ENCODE measurements at regions of chr9 and their contacts with region 1.

Region 1: GRCh38 chr9:106862825-106863720 is at the start of gene ZNF462:
- DNase-seq: peak; percentile 61
- ATAC-seq: peak; percentile 50
- total RNA-seq, gene ZNF462: 21.2 TPM

Region 2: DNA sequence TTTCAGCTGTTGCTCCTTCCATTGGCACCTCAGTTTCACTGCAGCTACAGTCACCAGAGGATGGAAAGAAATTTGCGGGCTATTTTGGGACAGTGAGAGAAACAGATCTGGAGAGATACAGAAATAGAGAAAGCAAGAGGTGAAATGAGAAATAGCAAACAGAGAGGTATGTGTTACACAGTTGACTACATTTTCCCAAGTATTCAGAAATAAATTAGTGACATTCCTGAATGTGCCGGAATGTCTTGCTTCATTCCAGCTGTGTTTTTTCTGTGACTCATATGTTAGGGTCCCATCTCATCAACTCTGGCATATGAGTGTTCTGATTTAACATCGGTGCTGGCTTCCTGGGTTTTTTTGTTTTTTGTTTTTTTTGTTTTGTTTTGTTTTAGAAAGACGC is 63.9 kb before region 1 on chr9:
- intact Hi-C with region 1: no loop called
- DNase-seq: no peak
- ATAC-seq: no peak

Region 3: DNA sequence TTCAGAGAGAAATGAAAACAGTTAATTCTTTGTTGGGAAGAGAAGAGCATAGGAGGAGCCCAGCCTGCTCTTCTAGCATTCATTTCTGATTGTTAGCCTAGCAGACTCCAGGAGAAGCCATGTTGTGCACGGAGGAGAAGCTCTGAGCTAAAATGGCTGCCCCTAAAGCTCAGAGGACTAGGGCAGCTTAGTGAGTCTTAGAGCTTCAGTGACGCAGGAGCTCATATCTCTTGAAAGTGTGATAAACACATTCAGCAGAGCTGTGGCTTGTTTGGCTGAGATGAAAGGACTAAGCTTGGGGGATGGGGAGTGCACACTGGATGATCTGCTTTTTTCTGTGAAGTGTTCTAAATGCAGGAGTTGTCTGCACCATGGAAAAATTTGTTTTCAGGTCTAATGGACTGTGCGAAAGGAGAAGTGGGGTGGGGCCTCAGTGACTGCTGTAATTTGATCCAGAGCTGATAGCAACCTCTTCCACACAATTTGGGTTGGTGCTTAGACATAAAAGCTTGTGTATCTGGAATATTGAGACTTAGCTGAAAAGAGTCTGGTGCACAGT is 58.3 kb after region 1 on chr9:
- intact Hi-C with region 1: loop called (anchors 2 kb)
- DNase-seq: no peak
- ATAC-seq: peak; percentile 91

Region 4: DNA sequence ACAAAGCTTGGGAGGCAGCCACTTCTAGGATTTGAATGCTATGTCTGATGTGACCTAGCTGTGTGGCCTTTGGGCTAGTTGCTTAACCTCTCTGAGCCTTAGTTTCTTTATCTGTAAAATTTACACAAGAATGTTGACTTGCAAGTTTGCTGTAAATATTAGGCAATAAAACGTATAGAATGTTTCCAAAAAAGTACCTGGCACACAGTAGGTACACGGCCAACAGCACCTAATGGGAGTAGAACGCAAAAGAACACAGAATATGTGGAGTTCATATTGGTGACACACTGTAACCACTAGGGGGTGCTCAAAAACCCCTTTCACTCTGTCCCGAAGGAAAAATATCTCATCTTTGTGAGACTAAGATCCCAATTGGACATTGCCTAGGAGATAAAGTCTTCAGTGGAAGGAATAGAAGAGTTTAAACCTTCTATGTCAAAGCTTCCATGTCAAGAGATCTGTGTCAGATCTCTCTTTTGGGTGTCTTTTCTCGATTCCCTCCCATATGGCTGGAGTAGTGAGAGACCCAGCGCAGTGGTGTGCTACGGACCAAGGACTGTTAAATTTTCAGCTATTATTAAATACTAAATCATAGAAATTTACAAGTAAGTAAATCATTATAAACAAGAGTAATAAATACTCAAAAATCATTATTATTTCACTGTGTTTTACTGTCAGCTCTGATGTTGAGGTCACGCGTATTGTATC is 274.6 kb after region 1 on chr9:
- intact Hi-C with region 1: no loop called
- DNase-seq: no peak
- ATAC-seq: no peak